ENCODE measurements at regions of chr5 and their contacts with region 1.

Region 1: GRCh38 chr5:154811653-154812365 is 38.6 kb downstream of the FAXDC2 start:
- DNase-seq: peak; percentile 73
- H3K4me3 ChIP-seq: no peak overlapping the region
- H3K27ac ChIP-seq: no peak overlapping the region
- H3K4me1 ChIP-seq: no peaks in the 10 kb centered on the region
- H3K27me3 ChIP-seq: no peaks in the 10 kb centered on the region

Region 2: GRCh38 chr5:154467655-154468354 is 344.0 kb before region 1 on chr5:
- in situ Hi-C with region 1: loop called (anchors 25 kb)
- DNase-seq: peak; percentile 80
- H3K4me3 ChIP-seq: no peak overlapping the region
- H3K27ac ChIP-seq: no peak overlapping the region
- H3K4me1 ChIP-seq: no peaks in the 10 kb centered on the region
- H3K27me3 ChIP-seq: peaks cover 31% of the 10 kb centered on the region

Region 3: DNA sequence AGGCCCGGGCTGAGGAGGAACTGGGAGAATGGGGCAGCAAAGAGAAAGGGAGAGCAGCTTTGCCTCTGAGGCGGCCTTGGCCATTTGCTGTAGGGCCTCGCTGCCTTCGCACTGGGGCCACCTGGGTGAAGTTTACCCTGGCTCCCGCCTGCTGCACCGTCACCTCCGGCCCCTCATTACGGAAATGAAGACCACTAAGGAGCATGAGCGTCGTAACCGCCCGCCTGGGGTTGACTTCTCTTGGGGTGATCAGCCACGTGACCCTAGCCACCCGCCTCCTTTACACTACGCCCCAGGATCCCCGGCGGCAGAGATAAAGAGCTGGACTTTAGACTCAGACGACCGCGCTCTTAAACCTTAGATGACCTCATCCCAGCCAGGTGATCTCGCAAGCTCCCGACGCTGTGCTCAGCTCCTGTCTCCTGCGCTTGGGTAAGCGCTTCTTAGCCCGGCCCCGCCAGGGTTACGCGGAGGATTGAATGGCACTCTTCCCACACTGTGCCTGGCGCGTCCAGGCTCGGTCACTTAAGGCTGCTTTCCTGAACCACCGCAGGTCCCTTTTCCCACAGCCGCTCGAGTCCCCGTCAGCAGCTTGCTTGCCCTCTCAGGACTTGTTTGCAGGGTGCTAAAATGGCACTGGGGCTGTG is 164.6 kb before region 1 on chr5:
- in situ Hi-C with region 1: loop called (anchors 10 kb)
- DNase-seq: peak; percentile 37
- H3K4me3 ChIP-seq: 0 out of 2 replicates have a peak overlapping the region, but pooled peaks have one; percentile 27
- H3K27ac ChIP-seq: no peak overlapping the region
- H3K4me1 ChIP-seq: no peaks in the 10 kb centered on the region
- H3K27me3 ChIP-seq: no peaks in the 10 kb centered on the region